Panc1 (cell line): ENCODE measurements at regions of chr19 and their contacts with region 1.

Region 1: GRCh38 chr19:38949580-38950367 is 19.0 kb downstream of the MRPS12 start:
- DNase-seq: no peak
- ATAC-seq: peak; percentile 28
- H3K4me3 ChIP-seq: no peak overlapping the region
- H3K27ac ChIP-seq: no peak overlapping the region
- H3K4me1 ChIP-seq: no peaks in the 10 kb centered on the region
- H3K27me3 ChIP-seq: no peaks in the 10 kb centered on the region
- CTCF ChIP-seq: no peak

Region 2: DNA sequence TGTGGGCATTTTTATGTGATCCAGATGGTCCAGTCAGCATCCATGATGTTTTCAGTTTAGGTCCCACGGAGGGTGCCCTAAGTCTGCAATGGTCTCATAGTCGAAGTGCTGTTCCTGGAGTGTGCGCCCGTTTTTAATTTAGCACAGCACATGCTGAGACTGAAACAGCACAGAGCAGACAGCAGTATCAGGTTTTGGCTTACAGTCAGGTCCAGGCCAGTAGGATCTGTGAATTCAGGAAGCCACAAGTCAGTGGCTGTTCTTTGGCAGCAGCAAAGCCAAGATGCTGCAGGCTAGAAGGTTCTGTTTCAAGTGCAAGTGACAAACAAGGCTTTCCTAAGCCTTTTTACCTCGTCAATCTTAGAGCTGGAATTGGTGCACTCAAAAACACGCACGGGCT is 64.3 kb after region 1 on chr19:
- CTCF ChIA-PET with region 1: no interaction called
- POLR2A ChIA-PET with region 1: no interaction called
- in situ Hi-C with region 1: no loop called
- intact Hi-C with region 1: no loop called
- DNase-seq: no peak
- ATAC-seq: peak; percentile 43
- H3K4me3 ChIP-seq: no peak overlapping the region
- H3K27ac ChIP-seq: no peak overlapping the region
- H3K4me1 ChIP-seq: no peaks in the 10 kb centered on the region
- H3K27me3 ChIP-seq: no peaks in the 10 kb centered on the region
- CTCF ChIP-seq: no peak

Region 3: DNA sequence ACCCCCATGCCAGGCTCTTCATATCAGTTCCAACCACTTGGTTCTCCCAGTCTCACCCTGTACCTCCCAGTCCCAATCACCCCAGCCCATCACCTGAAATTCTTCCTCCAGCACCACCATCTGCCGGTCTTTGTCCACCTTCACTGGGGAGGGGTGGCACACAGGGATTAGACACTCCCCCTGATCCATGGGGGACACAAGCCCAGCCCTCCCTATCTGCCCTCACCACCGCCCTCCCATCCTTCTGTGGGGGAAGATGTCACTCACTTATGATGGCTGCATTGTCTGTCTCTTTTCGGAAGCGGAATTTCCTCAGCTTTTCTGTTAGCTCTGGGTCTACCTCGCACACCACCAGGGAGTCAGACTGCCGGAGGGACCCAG is 385.4 kb after region 1 on chr19:
- CTCF ChIA-PET with region 1: no interaction called
- POLR2A ChIA-PET with region 1: no interaction called
- in situ Hi-C with region 1: no loop called
- intact Hi-C with region 1: loop called (anchors 10 kb)
- DNase-seq: no peak
- ATAC-seq: peak; percentile 6
- H3K4me3 ChIP-seq: no peak overlapping the region
- H3K27ac ChIP-seq: no peak overlapping the region
- H3K4me1 ChIP-seq: peaks cover 4% of the 10 kb centered on the region; the same call in 1 of the 2 replicates
- H3K27me3 ChIP-seq: no peaks in the 10 kb centered on the region
- CTCF ChIP-seq: no peak